ENCODE measurements at regions of chr18 and their contacts with region 1.

Region 1: DNA sequence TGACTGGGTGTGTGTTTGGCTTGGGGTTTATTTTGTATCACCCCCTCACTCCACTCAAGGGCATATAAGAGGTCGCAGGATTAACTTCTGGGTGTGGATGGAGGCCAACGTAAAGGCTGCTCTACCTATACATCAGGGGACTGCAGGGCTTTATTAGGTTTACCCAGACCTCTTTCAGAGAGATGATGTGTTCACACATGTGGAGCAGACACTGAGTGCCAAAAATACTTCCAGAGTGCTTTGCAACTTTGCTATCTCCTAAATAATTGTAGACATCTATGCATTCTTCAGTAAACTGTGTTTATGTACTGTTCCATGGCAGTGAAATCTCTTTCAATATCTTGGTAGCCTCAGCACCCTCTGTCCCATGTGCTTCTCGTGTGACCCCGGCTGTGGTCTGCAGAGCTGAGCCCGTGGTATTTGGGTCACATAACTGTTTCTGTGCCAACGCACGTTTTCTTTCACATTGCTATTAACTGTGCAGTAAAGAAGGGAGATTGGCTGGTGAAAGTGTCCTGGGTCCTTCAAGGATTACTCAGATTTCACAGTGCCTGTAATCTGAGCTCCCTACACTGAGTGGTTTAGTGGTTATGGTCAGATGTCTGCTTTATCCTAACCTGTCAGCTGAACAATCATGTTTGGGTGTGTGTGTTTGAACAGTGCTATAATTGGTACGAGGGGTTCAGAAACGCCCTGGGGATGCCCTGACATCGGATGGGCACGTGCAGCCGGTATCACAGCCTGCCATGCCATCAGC is 208.1 kb downstream of the VAPA start:
- DNase-seq: no peak

Region 2: DNA sequence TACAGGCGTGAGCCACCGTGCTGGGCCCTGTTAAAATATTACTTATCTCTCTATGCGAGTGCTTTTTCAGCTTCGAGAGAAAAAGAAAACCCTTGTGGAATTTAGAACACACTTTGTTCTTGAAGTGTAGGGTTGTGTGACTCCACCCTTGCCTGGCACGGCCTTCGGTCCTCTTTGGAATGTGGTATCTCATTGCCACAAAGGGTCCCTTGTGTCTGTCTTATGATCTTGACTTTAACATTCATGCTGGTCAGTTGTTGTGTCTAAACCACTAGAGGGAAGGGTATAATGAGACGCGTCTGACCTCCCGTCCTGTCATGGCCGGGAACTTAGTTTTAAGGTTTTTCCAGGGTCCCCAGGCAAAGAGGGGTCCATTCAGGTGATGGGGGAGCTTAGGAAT is 38.3 kb after region 1 on chr18:
- intact Hi-C with region 1: loop called in 1 of 2 experiments (anchors 1 kb)
- DNase-seq: no peak

Measured in posterior vena cava (tissue), 2 donors.